Right cardiac atrium (tissue), 5 donors: ENCODE measurements at regions of chr15 and their contacts with region 1.

Region 1: DNA sequence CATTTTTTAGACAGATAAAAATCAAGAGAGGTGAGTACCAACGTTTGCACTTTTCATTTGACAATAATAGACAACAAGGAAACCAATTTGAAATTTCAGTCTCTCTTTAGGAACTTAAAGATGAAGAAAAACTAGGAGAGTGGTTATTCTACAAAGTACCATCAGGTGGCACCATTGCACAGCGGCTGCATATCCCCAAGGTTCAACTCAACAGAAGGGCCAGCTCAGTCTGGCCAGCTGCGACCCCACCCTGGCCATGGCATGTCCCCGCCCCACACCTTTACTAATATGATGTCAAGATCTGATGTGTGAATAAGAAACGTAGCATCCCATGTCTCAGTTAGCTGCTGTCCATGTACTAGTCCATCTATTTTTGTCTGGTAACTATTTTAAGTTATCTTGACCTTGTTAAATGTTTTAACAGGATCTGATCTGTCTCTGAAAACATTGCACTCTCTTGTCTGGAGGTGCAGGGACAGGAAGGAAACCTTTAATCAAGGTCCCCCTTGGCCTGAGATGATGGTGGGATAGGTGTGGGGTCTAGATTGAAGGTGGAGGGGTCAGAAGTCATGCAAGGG is 35.5 kb upstream of the CGNL1 start:
- DNase-seq: peak; percentile 53 to 77 (median 71)
- ATAC-seq: peak; percentile 48 to 61
- H3K4me3 ChIP-seq: no peak overlapping the region
- H3K27ac ChIP-seq: no peak overlapping the region
- H3K4me1 ChIP-seq: no peaks in the 10 kb centered on the region
- H3K27me3 ChIP-seq: no peaks in the 10 kb centered on the region

Region 2: GRCh38 chr15:57245130-57245529 is 95.6 kb before region 1 on chr15:
- intact Hi-C with region 1: no loop called
- DNase-seq: no peak
- ATAC-seq: peak; percentile 36 to 43
- H3K4me3 ChIP-seq: no peak overlapping the region
- H3K27ac ChIP-seq: no peak overlapping the region
- H3K4me1 ChIP-seq: peaks cover 4% of the 10 kb centered on the region
- H3K27me3 ChIP-seq: no peaks in the 10 kb centered on the region

Region 3: GRCh38 chr15:57458356-57458781 is 117.6 kb after region 1 on chr15:
- intact Hi-C with region 1: loop called in 1 of 4 experiments (anchors 5 kb)
- DNase-seq: peak in 2 of 3 donors; percentile 31 to 72
- ATAC-seq: peak; percentile 77 to 85
- H3K4me3 ChIP-seq: no peak overlapping the region
- H3K27ac ChIP-seq: no peak overlapping the region
- H3K4me1 ChIP-seq: peaks cover 1% of the 10 kb centered on the region
- H3K27me3 ChIP-seq: no peaks in the 10 kb centered on the region

Region 4: DNA sequence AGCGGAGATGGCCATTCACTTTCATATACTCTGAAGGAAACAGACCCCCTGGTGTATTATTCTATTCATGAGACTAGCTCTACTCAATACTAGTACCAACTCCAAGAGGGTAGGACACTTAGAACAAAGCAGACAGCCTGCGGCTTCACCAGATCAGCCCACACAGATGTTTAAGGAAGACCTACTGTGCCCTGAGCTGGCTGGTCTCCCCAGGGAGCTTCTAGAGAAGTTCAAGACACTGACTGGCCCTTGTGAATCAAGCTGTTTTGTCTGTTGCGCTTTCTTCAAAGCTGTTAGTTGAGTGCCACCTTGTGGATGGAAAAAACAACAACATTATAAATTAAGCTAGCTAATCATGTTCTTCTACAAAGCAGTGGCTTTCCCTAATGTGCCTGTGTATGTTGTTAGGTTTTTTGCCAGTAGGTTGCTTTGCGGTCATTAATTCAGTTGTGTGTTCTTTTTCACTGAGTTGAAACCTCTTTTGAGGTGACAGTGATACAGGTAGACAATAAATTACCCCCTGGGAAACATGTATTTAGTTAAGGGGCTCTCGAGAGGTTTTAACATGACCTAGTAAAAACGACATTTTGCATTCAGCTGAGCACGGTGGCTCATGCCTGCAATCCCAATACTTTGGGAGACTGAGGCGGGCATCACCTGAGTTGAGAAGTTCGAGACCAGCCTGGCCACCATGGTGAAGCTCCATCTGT is 186.8 kb after region 1 on chr15:
- intact Hi-C with region 1: loop called (anchors 2 to 5 kb)
- DNase-seq: peak in 2 of 3 donors; percentile 51 to 66
- ATAC-seq: peak; percentile 78 to 82
- H3K4me3 ChIP-seq: no peak overlapping the region
- H3K27ac ChIP-seq: no peak overlapping the region
- H3K4me1 ChIP-seq: peaks cover 2% of the 10 kb centered on the region
- H3K27me3 ChIP-seq: no peaks in the 10 kb centered on the region